Psoas muscle (tissue), 8 donors: ENCODE measurements at regions of chr17 and their contacts with region 1.

Region 1: GRCh38 chr17:50482516-50482915 is 3.9 kb downstream of the RSAD1 start:
- DNase-seq: peak; percentile 97 to 98
- ATAC-seq: peak; percentile 69 to 73 (median 70)
- H3K4me3 ChIP-seq: peak overlapping the region; percentile 36
- H3K27ac ChIP-seq: peak overlapping the region; percentile 96
- H3K4me1 ChIP-seq: peaks cover 37% of the 10 kb centered on the region
- H3K27me3 ChIP-seq: no peaks in the 10 kb centered on the region
- CTCF ChIP-seq: peak; percentile 81

Region 2: GRCh38 chr17:50541716-50542688 is 59.5 kb after region 1 on chr17:
- intact Hi-C with region 1: loop called (anchors 2 to 5 kb)
- DNase-seq: peak; percentile 88 to 92
- ATAC-seq: peak; percentile 91 to 95 (median 92)
- H3K4me3 ChIP-seq: peak overlapping the region; percentile 73
- H3K27ac ChIP-seq: peak overlapping the region; percentile 65
- H3K4me1 ChIP-seq: peaks cover 7% of the 10 kb centered on the region
- H3K27me3 ChIP-seq: no peaks in the 10 kb centered on the region
- CTCF ChIP-seq: peak; percentile 16

Region 3: GRCh38 chr17:50547035-50547735 is 64.7 kb after region 1 on chr17 and contains the start of gene SPATA20:
- intact Hi-C with region 1: loop called (anchors 2 to 5 kb)
- DNase-seq: peak; percentile 91 to 94
- ATAC-seq: peak; percentile 82 to 90 (median 86)
- H3K4me3 ChIP-seq: peak within 1 kb of the TSS; percentile 85
- H3K27ac ChIP-seq: peak within 1 kb of the TSS; percentile 83
- H3K4me1 ChIP-seq: peaks cover 7% of the 10 kb centered on the region
- H3K27me3 ChIP-seq: no peaks in the 10 kb centered on the region
- CTCF ChIP-seq: peak; percentile 99
- total RNA-seq, gene SPATA20: 16.7 to 25.8 (median 21.9) TPM

Region 4: GRCh38 chr17:50626037-50626574 is 143.6 kb after region 1 on chr17:
- intact Hi-C with region 1: loop called (anchors 5 kb)
- DNase-seq: peak; percentile 80 to 87
- ATAC-seq: peak; percentile 80 to 90 (median 82)
- H3K4me3 ChIP-seq: no peak overlapping the region
- H3K27ac ChIP-seq: no peak overlapping the region
- H3K4me1 ChIP-seq: no peaks in the 10 kb centered on the region
- H3K27me3 ChIP-seq: peaks cover 0 to 26% (median 3%) of the 10 kb centered on the region in 3 donors
- CTCF ChIP-seq: peak; percentile 72

Region 5: DNA sequence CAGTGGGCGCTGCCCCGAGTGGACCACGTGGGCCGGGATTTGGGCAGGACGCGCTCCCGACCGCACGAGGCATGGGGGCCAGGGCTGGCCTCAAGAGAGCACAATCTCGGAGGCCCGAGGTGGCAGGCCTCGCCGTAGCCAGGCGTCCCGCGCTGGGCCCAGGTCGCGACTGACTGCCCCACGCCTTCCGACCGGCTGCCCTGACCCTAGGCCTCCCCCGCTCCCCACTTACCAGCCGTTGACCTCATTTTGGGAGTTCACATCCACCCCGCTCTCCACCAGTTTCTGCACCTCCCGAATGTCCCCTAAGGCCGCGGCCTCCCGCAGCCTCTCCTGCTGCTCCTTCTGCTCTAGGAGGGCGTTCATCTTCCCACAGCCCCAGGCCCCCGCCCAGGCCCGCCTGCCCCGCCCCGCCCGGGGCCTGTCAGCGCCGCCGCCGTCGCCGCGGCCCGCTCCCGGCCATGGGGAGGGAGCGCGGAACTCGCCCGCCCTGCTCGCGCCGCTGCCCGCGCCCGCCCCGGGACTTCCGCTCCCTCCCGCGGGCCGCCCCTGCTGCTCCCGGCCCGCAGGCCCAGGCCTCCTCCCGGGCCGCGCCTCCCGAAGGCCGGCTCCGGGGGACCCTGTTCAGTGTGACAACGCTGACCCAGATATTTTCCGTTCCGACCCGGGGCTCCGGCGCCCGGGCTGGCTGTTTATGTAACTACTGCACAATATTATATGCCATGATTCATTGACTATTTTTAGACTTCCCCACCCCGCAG is 225.0 kb after region 1 on chr17 and contains the start of gene ANKRD40:
- intact Hi-C with region 1: loop called in 1 of 2 experiments (anchors 5 kb)
- DNase-seq: peak; percentile 89 to 94
- ATAC-seq: peak; percentile 87 to 91 (median 88)
- H3K4me3 ChIP-seq: peak within 1 kb of the TSS; percentile 86
- H3K27ac ChIP-seq: peak within 1 kb of the TSS; percentile 94
- H3K4me1 ChIP-seq: peaks cover 51% of the 10 kb centered on the region
- H3K27me3 ChIP-seq: no peaks in the 10 kb centered on the region
- CTCF ChIP-seq: no peak
- total RNA-seq, gene ANKRD40: 91.8 to 132 (median 112) TPM

Region 6: DNA sequence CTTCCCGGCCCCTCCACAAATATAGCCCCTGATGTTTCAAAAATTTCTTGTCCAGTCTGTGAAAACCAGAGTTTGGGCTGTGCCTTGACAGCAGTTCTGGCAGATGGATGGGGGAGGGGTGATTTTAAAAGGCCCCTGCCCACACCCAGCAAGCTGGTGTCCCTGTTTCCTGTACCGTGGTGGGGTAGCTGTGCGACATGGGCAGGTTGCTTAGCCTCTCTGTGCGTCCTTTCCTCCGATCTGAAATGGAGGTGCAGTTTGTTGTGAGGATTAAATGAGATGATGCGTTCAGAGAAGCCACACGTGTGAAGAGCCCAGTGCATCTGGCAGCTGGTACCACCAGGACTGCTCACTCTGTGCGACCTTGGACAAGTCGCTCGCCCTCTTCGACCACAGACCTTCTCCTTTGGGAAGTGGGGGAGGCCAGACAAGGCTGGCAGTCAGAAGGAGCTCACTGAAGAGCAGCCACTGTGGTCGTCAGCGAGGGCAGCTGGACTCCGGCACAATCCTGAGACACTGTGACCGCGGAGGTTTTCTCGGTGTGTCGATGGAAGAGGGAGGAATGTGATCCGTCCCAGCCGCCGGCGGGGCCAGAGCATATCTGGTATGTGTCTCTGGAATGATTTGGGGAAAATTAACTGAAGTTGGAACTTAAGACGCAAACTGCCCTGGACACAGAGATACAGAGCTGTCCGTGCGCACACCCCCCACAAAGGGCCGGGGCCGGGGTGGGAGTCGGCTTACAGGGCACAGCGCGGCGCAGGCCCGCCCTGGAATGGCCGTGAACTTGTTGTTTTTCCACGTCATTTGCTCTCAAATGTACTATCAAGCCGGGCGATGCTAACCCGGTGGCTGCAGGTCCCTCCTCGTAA is 352.1 kb after region 1 on chr17:
- intact Hi-C with region 1: loop called (anchors 10 kb)
- DNase-seq: no peak
- ATAC-seq: peak; percentile 39 to 82 (median 64)
- H3K4me3 ChIP-seq: peak overlapping the region; percentile 65
- H3K27ac ChIP-seq: peak overlapping the region; percentile 46
- H3K4me1 ChIP-seq: peaks cover 4% of the 10 kb centered on the region
- H3K27me3 ChIP-seq: no peaks in the 10 kb centered on the region
- CTCF ChIP-seq: no peak